ENCODE measurements at regions of chr6 and their contacts with region 1.

Region 1: GRCh38 chr6:3751730-3752542 is 423 bp upstream of the PXDC1 start:
- DNase-seq: peak; percentile 95
- H3K4me3 ChIP-seq: peak overlapping the region; percentile 85 to 96 (median 89)
- H3K27ac ChIP-seq: peak overlapping the region; percentile 99
- H3K4me1 ChIP-seq: peaks cover 42% of the 10 kb centered on the region
- H3K27me3 ChIP-seq: no peaks in the 10 kb centered on the region
- CTCF ChIP-seq: peak; percentile 24 to 60
- POLR2A ChIP-seq: no peak

Region 2: DNA sequence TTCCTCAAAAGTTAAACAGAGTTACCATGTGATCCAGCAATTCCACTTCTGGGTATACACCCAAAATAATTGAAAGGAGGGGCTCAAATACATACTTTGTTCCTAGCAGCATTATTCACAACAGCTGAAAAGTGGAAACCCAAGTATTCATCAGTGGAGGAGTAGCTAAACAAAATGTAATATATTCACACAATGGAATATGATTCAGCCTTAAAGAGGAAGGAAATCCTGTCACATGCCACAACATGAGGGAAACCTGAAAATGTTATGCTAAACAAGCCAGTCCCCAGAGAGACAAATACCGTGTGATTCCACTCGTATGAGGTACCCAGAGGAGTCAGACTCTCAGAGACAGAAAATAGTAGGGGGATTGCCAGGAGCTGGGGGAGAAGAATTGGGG is 44.9 kb before region 1 on chr6:
- CTCF ChIA-PET with region 1: no interaction called
- POLR2A ChIA-PET with region 1: no interaction called
- dilution Hi-C with region 1: no loop called
- intact Hi-C with region 1: no loop called
- DNase-seq: peak; percentile 89
- H3K4me3 ChIP-seq: no peak overlapping the region
- H3K27ac ChIP-seq: no peak overlapping the region
- H3K4me1 ChIP-seq: peaks cover 6% of the 10 kb centered on the region
- H3K27me3 ChIP-seq: no peaks in the 10 kb centered on the region
- CTCF ChIP-seq: no peak
- POLR2A ChIP-seq: no peak

Region 3: GRCh38 chr6:3732345-3733141 is 19.4 kb before region 1 on chr6:
- CTCF ChIA-PET with region 1: no interaction called
- POLR2A ChIA-PET with region 1: no interaction called
- dilution Hi-C with region 1: no loop called
- intact Hi-C with region 1: no loop called
- DNase-seq: peak; percentile 88
- H3K4me3 ChIP-seq: no peak overlapping the region
- H3K27ac ChIP-seq: no peak overlapping the region
- H3K4me1 ChIP-seq: peaks cover 40% of the 10 kb centered on the region
- H3K27me3 ChIP-seq: no peaks in the 10 kb centered on the region
- CTCF ChIP-seq: peak; percentile 79 to 84
- POLR2A ChIP-seq: peak; percentile 22

Region 4: DNA sequence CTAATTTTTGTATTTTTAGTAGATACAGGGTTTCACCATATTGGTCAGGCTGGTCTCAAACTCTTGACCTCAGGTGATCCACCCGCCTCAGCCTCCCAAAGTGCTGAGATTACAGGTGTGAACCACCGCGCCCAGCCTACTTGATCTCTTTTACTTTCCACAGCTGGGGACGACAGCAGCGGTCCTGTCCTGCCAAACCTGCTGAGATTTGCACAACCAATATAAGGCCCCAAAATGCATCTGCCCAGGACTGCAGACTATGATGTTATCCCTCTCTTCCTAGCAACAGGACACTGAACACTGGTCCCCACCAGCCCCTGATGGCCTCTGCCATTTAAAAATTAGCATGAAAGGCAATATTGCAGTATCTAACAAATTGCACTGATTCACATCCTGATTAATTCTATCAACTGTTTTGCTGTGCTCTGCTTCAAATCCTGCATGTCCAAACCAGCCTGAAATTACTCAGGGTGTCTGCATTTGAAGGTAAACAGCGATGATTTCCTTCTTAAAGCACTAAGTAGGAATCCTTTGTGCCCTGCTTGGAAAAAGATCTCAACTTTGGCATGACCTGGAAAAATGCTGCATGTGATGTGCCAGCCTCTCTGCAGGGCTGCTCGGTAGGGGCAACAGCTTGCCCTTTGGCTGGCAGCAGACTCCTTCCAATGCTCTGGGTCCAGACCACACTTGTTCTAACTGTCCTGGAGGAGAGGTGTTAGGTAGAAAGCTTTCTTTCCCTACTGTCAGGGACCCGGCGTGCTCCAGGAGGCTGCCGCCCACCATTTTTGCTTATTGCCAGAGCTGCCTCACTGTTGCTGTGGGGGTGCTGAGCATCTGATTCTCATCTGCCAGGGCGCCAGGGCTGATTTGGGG is 27.0 kb after region 1 on chr6:
- CTCF ChIA-PET with region 1: no interaction called
- POLR2A ChIA-PET with region 1: no interaction called
- dilution Hi-C with region 1: no loop called
- intact Hi-C with region 1: no loop called
- DNase-seq: no peak
- H3K4me3 ChIP-seq: no peak overlapping the region
- H3K27ac ChIP-seq: no peak overlapping the region
- H3K4me1 ChIP-seq: peaks cover under 1% of the 10 kb centered on the region
- H3K27me3 ChIP-seq: no peaks in the 10 kb centered on the region
- CTCF ChIP-seq: no peak
- POLR2A ChIP-seq: no peak

Region 5: GRCh38 chr6:3797231-3798054 is 45.5 kb after region 1 on chr6:
- CTCF ChIA-PET with region 1: interaction called, 12 read pairs
- POLR2A ChIA-PET with region 1: interaction called, 15 read pairs
- dilution Hi-C with region 1: no loop called
- intact Hi-C with region 1: loop called (anchors 1 kb)
- DNase-seq: peak; percentile 83
- H3K4me3 ChIP-seq: no peak overlapping the region
- H3K27ac ChIP-seq: peak overlapping the region; percentile 100
- H3K4me1 ChIP-seq: peaks cover 39% of the 10 kb centered on the region
- H3K27me3 ChIP-seq: no peaks in the 10 kb centered on the region
- CTCF ChIP-seq: no peak
- POLR2A ChIP-seq: peak; percentile 58

Region 6: GRCh38 chr6:3813150-3813780 is 61.3 kb after region 1 on chr6:
- CTCF ChIA-PET with region 1: interaction called, 6 read pairs
- POLR2A ChIA-PET with region 1: interaction called, 3 read pairs
- dilution Hi-C with region 1: no loop called
- intact Hi-C with region 1: loop called (anchors 1 kb)
- DNase-seq: peak; percentile 95
- H3K4me3 ChIP-seq: no peak overlapping the region
- H3K27ac ChIP-seq: peak overlapping the region; percentile 95
- H3K4me1 ChIP-seq: peaks cover 44% of the 10 kb centered on the region
- H3K27me3 ChIP-seq: no peaks in the 10 kb centered on the region
- CTCF ChIP-seq: no peak
- POLR2A ChIP-seq: peak; percentile 55

Region 7: DNA sequence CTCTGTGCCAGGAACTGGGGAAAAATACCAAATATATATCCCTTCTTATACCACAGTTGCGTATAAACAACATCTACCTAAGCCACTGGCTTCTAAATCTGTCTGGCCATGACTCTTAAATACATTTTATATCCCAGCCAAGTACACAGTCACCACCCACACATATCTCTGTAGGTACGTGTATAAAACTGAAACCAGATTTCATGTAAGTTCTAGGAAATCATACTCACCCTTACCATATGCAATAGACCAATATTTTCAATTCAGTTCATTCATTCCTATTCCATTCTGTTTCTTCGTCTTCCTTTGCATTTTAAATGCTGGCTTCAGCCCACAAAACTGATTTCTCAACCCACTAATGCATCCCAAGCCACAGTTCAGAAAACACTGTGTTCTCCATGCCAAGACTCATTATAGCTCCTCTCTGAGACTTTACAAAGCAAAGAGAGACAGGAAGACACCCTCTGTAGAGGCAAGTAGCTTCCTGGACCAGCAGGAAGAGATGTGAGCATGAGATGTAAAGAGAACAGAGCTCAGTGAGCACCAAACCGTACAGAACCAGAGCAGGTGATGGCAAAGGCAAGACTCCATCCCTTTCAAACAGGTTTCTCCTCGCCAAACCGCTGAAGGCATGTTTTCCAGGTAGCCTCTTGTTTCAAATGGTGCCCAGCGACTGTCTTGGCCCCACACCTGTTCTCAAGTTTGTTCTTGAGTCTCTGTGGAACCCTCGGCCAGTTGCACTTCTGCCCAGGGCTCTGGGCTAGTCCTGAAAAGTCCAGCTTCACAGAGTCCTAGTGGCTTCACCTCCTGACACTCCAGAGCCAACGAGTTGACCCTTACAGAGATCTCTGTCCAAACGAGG is 115.9 kb after region 1 on chr6:
- CTCF ChIA-PET with region 1: no interaction called
- POLR2A ChIA-PET with region 1: no interaction called
- dilution Hi-C with region 1: no loop called
- intact Hi-C with region 1: no loop called
- DNase-seq: no peak
- H3K4me3 ChIP-seq: no peak overlapping the region
- H3K27ac ChIP-seq: no peak overlapping the region
- H3K4me1 ChIP-seq: no peaks in the 10 kb centered on the region
- H3K27me3 ChIP-seq: no peaks in the 10 kb centered on the region
- CTCF ChIP-seq: no peak
- POLR2A ChIP-seq: no peak

Region 8: GRCh38 chr6:3990692-3991501 is 239.0 kb after region 1 on chr6:
- CTCF ChIA-PET with region 1: interaction called, 42 read pairs
- POLR2A ChIA-PET with region 1: interaction called, 3 read pairs
- dilution Hi-C with region 1: no loop called
- intact Hi-C with region 1: loop called (anchors 1 kb)
- DNase-seq: peak; percentile 91
- H3K4me3 ChIP-seq: no peak overlapping the region
- H3K27ac ChIP-seq: no peak overlapping the region
- H3K4me1 ChIP-seq: peaks cover 17% of the 10 kb centered on the region
- H3K27me3 ChIP-seq: no peaks in the 10 kb centered on the region
- CTCF ChIP-seq: peak; percentile 92 to 94
- POLR2A ChIP-seq: no peak